ENCODE measurements at regions of chr19 and their contacts with region 1.

Region 1: GRCh38 chr19:36796076-36796992 is 23.7 kb upstream of the ZNF850 start:
- DNase-seq: no peak
- H3K4me3 ChIP-seq: peak overlapping the region; percentile 70 to 75
- H3K27ac ChIP-seq: peak overlapping the region; percentile 73 to 76
- H3K4me1 ChIP-seq: peaks cover 0 to 19% (median 5%) of the 10 kb centered on the region in 4 donors
- H3K27me3 ChIP-seq: no peaks in the 10 kb centered on the region
- CTCF ChIP-seq: no peak

Region 2: DNA sequence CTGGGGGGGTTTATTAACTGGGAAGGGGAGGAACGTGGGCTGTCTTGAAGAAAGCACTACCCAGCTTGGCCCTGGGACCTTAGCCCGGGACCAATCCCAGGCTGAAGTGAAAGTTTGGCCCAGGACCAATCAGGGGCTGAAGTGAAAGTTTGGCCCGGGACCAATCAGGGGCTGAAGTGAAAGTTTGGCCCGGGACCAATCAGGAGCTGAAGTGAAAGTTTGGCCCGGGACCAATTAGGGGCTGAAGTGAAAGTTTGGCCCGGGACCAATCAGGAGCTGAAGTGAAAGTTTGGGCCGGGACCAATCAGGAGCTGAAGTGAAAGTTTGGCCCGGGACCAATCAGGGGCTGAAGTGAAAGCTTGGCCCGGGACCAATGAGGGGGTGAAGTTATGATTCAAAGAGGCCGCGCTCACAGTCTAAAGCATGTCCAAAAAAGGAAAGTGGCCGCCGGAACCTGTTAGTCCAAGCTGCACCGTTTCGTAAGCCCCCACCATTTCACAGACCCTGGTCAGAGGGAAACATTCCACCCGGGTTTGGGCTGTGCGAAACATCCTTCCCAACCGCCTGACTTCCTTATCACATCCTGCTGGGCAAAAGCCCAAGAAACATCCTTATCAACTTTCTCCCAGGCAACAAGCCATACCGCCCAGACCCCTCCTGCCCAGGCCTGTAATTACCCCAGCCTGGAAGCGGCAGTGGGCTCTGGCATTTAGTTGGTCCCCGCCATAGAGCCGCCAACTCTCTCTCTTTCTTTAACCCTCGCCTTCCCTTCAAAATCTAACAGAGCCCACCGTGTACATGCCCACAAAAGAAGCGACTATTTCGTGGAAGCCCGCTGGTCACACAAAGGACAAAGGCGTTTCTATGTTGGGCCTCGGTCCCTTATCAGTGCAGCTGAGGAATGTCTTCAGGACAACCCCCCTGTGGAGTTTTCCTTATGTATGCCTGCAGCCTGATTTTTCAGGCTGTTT is 24.8 kb before region 1 on chr19:
- intact Hi-C with region 1: loop called (anchors 1 kb)
- DNase-seq: peak; percentile 60 to 83
- H3K4me3 ChIP-seq: peak overlapping the region; percentile 77 to 81
- H3K27ac ChIP-seq: peak overlapping the region; percentile 73 to 81
- H3K4me1 ChIP-seq: peaks cover 0 to 16% (median 9%) of the 10 kb centered on the region in 4 donors
- H3K27me3 ChIP-seq: peaks cover 0 to 4% of the 10 kb centered on the region in 2 donors
- CTCF ChIP-seq: no peak

Region 3: DNA sequence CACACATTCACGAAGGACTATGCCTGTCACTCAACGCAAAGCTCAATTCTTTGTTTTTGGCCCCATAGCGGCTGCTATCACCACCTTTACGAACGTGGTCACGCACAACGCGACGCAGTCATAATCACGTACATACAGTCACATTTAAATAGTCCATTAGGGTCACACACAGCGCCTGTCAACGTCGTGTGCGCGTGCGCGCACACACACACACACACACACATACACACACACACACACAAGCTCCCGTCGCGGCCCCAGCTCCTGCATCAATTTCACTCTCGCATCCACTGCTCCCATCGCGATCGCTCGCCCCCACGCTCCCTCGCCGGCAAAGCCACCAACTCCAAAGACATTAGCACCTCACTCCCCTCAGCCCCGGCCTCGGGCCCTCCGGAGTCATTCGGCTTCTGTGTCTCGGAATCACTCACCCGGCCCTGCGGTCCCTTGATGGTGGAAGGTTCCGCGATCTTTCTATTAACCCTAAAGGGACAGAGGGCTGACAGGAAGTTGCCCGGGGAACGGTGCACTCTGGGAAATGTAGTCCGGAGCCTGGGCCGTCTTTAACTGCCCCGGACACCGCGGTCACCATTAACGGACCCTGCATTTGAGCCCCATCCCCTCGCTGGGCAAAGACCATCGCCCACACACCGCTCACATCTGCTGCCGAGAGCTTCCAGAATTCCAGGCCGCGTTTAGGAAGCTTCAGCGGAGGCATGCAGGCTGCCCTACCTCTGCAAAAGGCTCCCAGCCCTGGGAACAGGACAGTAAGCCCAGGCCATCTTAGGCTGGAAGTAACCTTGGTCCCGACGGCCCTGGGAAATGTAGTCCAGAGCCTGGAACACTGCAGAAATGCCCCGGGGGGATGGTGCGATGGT is 41.8 kb after region 1 on chr19 and contains the start of gene ZNF790:
- intact Hi-C with region 1: loop called (anchors 5 kb)
- DNase-seq: peak; percentile 89 to 93
- H3K4me3 ChIP-seq: peak within 1 kb of the TSS; percentile 66 to 74
- H3K27ac ChIP-seq: peak within 1 kb of the TSS; percentile 83 to 88
- H3K4me1 ChIP-seq: peaks cover 0 to 23% (median 8%) of the 10 kb centered on the region in 4 donors
- H3K27me3 ChIP-seq: no peaks in the 10 kb centered on the region
- CTCF ChIP-seq: no peak

Measured in tibial artery (tissue), 4 donors.